WTC11 (cell line): ENCODE measurements at regions of chr2 and their contacts with region 1.

Region 1: DNA sequence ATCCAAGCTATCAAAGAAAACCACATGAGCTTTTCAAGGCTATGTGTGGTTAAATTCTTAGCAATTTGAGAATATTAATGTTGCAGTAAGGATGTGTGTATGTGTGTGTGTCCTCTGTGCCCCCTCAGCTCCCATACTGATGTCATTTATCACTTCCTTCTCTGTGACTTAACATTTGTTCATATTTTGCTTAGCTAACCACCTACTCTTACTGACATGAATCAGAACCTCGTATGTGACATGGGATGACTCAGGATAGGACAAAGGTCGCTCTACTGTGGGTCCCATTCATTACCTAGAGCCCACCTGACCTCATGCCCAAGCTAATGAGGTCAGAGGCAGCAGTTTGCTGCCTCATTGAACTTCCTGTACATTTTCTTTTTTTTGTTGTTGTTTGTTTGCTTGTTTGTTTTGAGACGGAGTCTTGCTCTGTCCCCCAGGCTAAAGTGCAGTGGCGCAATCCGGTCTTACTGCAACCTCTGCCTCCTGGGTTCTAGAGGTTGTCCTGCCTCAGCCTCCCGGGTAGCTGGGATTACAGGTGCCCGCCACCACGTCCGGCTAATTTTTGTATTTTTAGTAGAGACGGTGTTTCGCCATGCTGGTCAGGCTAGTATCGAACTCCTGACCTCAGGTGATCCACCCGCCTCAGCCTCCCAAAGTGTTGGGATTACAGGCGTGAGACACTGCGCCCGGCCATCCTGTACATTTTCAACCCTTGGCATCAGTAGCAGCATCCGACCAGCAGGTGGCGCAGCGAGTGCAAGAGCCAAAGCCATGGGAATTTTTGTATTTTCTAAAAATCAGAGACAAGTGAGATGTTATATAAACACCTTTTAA is 36.4 kb downstream of the MOGAT1 start:
- DNase-seq: peak; percentile 84
- ATAC-seq: peak; percentile 43; the same call in 1 of the 2 replicates
- H3K4me3 Mint-ChIP-seq: no peak overlapping the region
- H3K27ac Mint-ChIP-seq: no peak overlapping the region
- H3K4me1 Mint-ChIP-seq: peaks cover 40% of the 10 kb centered on the region
- H3K27me3 Mint-ChIP-seq: no peaks in the 10 kb centered on the region
- CTCF ChIP-seq: peak; percentile 90

Region 2: GRCh38 chr2:222526480-222527277 is 181.2 kb before region 1 on chr2:
- CTCF ChIA-PET with region 1: no interaction called
- POLR2A ChIA-PET with region 1: no interaction called
- DNase-seq: no peak
- ATAC-seq: no peak
- H3K4me3 Mint-ChIP-seq: no peak overlapping the region
- H3K27ac Mint-ChIP-seq: no peak overlapping the region
- H3K4me1 Mint-ChIP-seq: no peaks in the 10 kb centered on the region
- H3K27me3 Mint-ChIP-seq: no peaks in the 10 kb centered on the region
- CTCF ChIP-seq: no peak

Region 3: GRCh38 chr2:222690564-222691200 is 17.2 kb before region 1 on chr2:
- CTCF ChIA-PET with region 1: interaction called, 20 read pairs
- POLR2A ChIA-PET with region 1: no interaction called
- DNase-seq: peak; percentile 83
- ATAC-seq: peak; percentile 96
- H3K4me3 Mint-ChIP-seq: no peak overlapping the region
- H3K27ac Mint-ChIP-seq: no peak overlapping the region
- H3K4me1 Mint-ChIP-seq: 0 out of 2 replicates have a peak, but pooled peaks cover 6% of the 10 kb centered on the region
- H3K27me3 Mint-ChIP-seq: no peaks in the 10 kb centered on the region; the same call in 1 of the 2 replicates
- CTCF ChIP-seq: peak; percentile 88

Region 4: GRCh38 chr2:222797261-222797660 is 89.4 kb after region 1 on chr2:
- CTCF ChIA-PET with region 1: interaction called, 11 read pairs
- POLR2A ChIA-PET with region 1: no interaction called
- DNase-seq: no peak
- ATAC-seq: peak; percentile 37; the same call in 1 of the 2 replicates
- H3K4me3 Mint-ChIP-seq: no peak overlapping the region
- H3K27ac Mint-ChIP-seq: no peak overlapping the region
- H3K4me1 Mint-ChIP-seq: peaks cover 28% of the 10 kb centered on the region
- H3K27me3 Mint-ChIP-seq: no peaks in the 10 kb centered on the region
- CTCF ChIP-seq: no peak

Region 5: DNA sequence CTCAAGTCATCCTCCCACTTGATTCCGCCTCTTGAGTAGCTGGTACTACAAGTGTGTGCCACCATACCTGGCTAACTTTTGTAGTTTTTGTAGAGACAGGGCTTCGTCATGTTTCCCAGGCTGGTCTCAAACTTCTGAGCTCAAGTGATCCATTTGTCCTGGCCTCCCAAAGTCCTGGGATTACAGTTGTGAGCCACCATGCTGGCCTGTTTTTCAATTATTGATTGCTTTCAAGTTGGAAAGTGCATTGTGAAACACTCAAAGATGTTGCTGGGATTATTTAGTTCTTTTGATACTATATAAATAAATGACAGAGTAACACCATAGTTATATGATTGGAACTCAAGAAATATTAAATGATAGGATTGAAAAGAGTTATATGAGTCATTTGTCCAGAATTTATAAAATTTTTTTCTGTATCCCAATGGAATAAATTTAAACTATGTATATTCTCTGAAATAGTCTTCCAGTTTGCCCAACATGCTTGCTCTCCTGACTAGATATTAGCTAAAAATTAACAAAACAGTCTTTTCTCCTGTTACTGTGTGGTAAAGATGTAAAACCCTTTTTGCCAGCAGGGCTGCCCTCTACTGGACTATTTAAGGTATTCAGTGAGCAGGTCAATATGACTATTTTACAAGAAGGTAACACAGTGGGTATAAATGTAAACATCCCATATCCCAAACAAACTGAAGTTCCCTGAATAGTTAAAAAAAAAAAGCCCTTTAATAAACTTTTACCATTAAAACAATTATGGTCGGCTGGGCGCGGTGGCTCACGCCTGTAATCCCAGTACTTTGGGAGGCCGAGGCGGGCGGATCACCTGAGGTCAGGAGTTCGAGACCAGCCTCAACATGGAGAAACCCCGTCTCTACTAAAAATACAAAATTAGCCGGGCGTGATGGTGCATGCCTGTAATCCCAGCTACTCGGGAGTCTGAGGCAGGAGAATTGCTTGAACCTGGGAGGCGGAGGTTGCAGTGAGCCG is 195.6 kb after region 1 on chr2:
- CTCF ChIA-PET with region 1: interaction called, 25 read pairs
- POLR2A ChIA-PET with region 1: no interaction called
- DNase-seq: no peak
- ATAC-seq: 0 out of 2 replicates have a peak, but pooled peaks have one; percentile 21
- H3K4me3 Mint-ChIP-seq: no peak overlapping the region
- H3K27ac Mint-ChIP-seq: peak overlapping the region; percentile 75; the same call in 1 of the 2 replicates
- H3K4me1 Mint-ChIP-seq: peaks cover 84% of the 10 kb centered on the region
- H3K27me3 Mint-ChIP-seq: no peaks in the 10 kb centered on the region
- CTCF ChIP-seq: peak; percentile 33